ENCODE measurements at regions of chr14 and their contacts with region 1.

Region 1: DNA sequence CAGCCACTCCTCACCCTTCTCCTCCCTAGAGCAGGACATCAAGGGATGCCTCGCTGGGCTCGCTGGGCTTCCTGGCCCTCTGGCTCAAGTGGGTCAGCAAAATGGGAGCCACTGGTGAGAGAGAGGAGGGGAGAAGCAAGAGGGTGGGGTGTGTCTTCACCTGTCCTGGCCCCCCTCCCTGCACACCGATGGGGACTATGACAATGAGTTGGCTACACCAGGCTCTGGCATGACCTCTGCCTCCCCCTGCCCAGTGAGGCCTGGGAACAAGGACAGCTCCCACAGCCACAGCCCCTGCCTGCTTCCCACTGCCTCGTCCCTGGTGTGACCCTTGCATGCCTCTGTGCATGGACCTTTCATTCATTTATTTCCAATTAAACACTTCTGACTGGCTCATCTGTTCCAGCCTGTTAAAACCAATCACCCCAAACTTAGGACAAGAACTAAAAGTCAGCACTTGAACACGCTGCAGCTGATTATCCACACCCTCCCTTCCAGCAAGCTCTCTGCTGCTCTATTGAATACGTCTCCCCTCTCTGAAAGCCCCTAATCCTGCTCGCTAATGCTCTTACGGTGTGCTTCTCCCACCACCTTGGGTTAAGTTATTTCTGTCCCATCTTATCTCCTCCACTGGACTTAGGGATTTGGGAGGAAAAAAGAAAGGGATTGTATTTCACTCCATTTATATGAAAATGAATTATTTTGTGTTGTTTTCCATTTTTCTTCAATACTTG is 5.8 kb upstream of the PPP2R5C start:
- DNase-seq: no peak
- ATAC-seq: no peak
- H3K4me3 ChIP-seq: no peak overlapping the region
- H3K4me3 Mint-ChIP-seq: no peak overlapping the region
- H3K27ac ChIP-seq: no peak overlapping the region
- H3K27ac Mint-ChIP-seq: peak overlapping the region in 2 of 9 donors; percentile 34 to 58
- H3K4me1 ChIP-seq: no peaks in the 10 kb centered on the region
- H3K4me1 Mint-ChIP-seq: peaks cover 5 to 23% (median 11%) of the 10 kb centered on the region in 7 donors
- H3K27me3 ChIP-seq: no peaks in the 10 kb centered on the region
- H3K27me3 Mint-ChIP-seq: peaks cover 0 to 51% (median 15%) of the 10 kb centered on the region in 5 donors

Region 2: GRCh38 chr14:101687756-101688546 is 67.8 kb before region 1 on chr14:
- CTCF ChIA-PET with region 1: no interaction called
- POLR2A ChIA-PET with region 1: no interaction called
- intact Hi-C with region 1: loop called in 1 of 2 experiments (anchors 2 kb)
- DNase-seq: no peak
- ATAC-seq: no peak
- H3K4me3 ChIP-seq: no peak overlapping the region
- H3K4me3 Mint-ChIP-seq: no peak overlapping the region
- H3K27ac ChIP-seq: no peak overlapping the region
- H3K27ac Mint-ChIP-seq: no peak overlapping the region
- H3K4me1 ChIP-seq: no peaks in the 10 kb centered on the region
- H3K4me1 Mint-ChIP-seq: no peaks in the 10 kb centered on the region
- H3K27me3 ChIP-seq: no peaks in the 10 kb centered on the region
- H3K27me3 Mint-ChIP-seq: peaks cover 0 to 32% (median 0%) of the 10 kb centered on the region in 5 donors

Measured in naive thymus-derived CD4-positive, alpha-beta T cell (primary cell).